Head of caudate nucleus (tissue), 42 donors: ENCODE measurements at regions of chrX and their contacts with region 1.

Region 1: DNA sequence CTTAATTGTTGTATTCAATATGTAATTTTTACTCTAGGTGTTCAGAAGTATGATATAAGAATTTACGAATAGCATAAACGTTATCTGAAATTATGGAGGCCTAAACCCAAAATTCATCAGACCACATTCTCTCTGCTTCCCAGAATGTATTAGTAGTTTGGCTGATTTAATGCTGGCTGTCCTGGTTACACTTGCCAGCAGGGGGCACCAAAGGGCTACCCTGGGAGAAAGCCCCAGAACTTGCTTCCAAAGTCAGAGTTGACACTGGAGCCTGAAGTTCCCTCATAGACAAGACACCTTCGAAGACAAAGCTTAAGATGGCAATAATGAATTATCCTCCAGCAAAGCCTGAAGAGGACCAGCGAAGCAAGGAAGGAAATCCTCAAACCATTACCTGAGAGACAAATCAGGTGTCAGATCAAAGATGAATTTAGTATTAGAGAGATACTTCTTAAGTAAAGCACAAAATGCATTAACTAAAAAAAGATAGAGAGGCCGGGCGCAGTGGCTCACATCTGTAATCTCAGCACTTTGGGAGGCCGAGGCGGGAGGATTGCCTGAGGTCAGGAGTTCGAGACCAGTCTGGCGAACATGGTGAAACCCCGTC is 11.3 kb upstream of the ANOS1 start:
- DNase-seq: peak in 38 of 42 donors; percentile 10 to 77 (median 50)

Region 2: GRCh38 chrX:7993873-7994272 is 749.4 kb before region 1 on chrX:
- intact Hi-C with region 1: loop called (anchors 5 kb)
- DNase-seq: no peak

Region 3: GRCh38 chrX:8179656-8180055 is 563.6 kb before region 1 on chrX:
- intact Hi-C with region 1: loop called (anchors 10 kb)
- DNase-seq: peak in 3 of 42 donors; percentile 6 to 14 (median 8)

Region 4: DNA sequence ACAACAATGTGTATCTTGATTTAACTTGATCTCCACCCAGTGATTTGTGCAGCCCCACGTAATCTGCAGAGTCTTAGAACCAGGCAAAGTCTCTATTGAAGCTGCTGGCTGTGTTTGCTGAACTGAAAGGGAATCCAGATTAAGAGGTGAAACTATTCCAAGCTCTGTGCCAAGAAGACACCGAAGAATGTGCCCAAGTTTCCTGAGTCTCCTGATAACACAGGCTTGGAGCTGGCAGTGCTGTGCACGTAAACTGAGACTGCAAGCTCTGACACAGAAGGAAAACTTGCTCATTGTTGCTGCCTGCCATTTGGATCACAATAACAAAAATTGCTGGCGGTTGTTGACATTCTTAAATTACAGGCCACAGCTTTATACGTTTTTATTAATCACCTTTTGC is 338.8 kb before region 1 on chrX:
- intact Hi-C with region 1: no loop called
- DNase-seq: no peak